Esophagus muscularis mucosa (tissue), 4 donors: ENCODE measurements at regions of chr7 and their contacts with region 1.

Region 1: DNA sequence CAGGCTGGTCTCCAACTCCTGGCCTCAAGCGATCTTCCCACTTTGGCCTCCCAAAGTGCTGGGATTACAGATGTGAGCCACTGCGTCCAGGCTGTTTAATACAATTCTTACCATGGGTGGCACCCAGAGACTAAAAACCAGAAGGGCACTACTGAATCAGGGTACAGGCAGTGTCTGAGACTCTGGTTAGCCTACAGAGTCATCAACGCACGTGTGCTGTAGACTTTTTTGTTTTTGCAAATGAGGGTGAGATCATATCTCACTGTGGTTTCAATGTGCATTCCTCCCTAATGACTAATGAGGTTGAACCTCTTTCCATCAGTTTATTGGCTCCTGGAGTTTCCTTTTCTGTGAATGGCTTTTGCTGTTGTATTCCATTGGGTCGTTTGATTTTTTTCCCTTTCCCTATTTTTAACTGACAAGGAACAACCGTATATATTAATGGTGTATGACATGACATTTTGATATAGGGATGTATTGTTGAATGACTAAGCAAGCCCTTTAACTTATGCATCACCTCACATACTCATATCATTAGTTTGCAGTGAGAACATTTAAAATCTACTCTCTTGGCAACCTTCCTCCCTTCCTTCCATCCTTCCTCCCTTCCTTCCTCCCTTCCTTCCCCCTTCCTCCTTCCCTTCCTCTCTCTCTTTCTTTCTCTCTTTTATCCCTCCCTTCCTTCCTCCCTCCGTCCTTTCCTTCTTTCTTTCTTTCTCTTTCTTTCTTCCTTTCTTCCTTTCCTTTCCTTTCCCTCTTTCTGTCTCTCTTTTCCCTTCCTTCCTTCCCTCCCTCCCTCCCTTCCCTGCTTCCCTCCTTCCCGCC is 9.3 kb upstream of the METTL27 start:
- DNase-seq: no peak
- H3K4me3 ChIP-seq: no peak overlapping the region
- H3K27ac ChIP-seq: peak overlapping the region; percentile 59 to 70 (median 64)
- H3K4me1 ChIP-seq: peaks cover 13 to 37% (median 31%) of the 10 kb centered on the region in 4 donors
- H3K27me3 ChIP-seq: peaks cover 0 to 8% (median 0%) of the 10 kb centered on the region in 4 donors
- CTCF ChIP-seq: no peak
- EP300 ChIP-seq: no peak
- POLR2A ChIP-seq: no peak

Region 2: DNA sequence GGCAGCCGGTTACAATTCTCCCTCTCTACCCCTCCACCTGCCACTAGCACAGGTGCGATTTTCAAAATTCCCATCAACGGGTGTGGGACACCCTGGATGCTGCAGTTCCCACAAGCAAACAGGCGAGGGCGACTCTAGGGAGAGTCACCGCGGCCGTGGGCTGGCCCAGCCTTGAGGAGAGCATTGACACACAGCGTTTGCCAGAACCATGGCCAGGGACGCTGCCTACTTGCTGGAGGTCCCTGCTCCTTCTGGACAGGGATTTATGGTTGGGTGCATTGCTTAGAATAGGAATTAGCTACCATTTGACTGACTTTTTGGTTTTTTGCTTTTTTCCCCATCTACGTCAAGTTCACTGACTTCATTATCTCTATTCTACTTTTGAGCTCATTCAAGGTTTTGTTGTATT is 39.9 kb before region 1 on chr7:
- intact Hi-C with region 1: loop called (anchors 2 kb)
- DNase-seq: no peak
- H3K4me3 ChIP-seq: no peak overlapping the region
- H3K27ac ChIP-seq: no peak overlapping the region
- H3K4me1 ChIP-seq: peaks cover 0 to 4% (median 0%) of the 10 kb centered on the region in 4 donors
- H3K27me3 ChIP-seq: peaks cover 0 to 16% (median 0%) of the 10 kb centered on the region in 4 donors
- CTCF ChIP-seq: peak; percentile 71 to 93 (median 82)
- EP300 ChIP-seq: no peak
- POLR2A ChIP-seq: no peak

Region 3: DNA sequence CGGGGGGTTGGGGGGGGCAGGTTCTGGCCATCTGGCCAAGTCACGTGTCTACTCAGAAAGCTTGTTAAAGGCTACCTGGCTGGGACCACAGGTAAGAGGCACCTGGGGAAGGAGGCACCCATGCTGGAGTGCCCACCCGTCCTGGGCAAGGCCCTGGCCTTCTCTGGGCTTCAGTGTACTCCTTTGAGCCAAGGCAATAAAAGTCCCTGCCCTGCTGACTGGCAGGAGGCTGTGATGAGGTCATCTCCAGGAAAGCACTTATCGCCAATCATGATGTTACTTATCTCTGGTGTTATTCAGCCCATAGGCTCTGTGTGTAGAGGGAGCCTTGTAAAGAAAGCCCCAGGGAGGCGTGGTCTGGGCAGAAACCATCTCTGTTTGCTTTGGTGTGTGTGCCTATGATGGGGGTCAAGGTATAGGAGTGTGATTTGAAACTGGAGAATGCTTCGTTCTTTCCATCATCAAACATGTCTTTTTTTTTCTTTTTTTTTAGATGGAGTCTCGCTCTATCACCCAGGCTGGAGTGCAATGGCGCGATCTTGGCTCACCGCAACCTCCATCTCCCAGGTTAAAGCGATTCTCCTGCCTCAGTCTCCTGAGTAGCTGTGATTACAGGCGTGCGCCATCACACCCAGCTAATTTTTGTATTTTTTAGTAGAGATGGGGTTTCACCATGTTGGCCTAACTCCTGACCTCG is 23.4 kb before region 1 on chr7:
- intact Hi-C with region 1: no loop called
- DNase-seq: no peak
- H3K4me3 ChIP-seq: no peak overlapping the region
- H3K27ac ChIP-seq: no peak overlapping the region
- H3K4me1 ChIP-seq: peaks cover 3 to 21% (median 17%) of the 10 kb centered on the region in 4 donors
- H3K27me3 ChIP-seq: peaks cover 0 to 46% (median 2%) of the 10 kb centered on the region in 4 donors
- CTCF ChIP-seq: no peak
- EP300 ChIP-seq: no peak
- POLR2A ChIP-seq: no peak

Region 4: DNA sequence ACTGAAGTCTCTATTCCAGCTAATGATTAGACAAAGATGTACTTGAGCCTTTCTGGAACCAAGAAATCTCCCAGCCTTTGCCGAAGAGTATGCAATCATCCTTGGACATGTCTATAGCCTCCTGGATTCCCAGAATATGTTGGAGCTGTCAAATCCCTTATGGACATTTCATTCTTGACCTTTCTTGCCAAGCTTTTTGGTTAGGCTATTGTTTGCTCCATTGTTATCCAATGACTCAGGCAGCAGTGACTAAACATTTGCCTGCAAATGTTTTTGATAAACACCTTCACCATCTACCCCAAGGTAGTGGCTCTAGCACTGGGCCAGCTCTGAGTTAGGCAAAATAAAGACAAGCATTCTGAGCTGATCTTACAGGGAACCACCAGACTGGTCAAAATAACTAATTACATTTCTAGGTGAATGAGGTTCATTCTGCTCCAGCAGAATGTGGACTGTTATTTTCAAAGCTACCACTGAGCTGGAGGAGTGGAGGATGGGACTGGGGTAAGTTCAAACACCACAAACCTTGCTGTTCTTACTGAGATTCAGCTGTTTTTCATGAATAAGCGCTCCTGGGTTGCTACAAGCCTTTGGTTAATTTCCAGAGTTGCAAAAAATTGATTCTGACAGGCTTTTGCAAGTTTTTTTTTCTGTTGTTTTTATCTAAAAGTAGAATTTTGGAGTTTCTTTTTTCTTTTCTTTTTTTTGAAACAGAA is 90.4 kb after region 1 on chr7:
- intact Hi-C with region 1: no loop called
- DNase-seq: no peak
- H3K4me3 ChIP-seq: no peak overlapping the region
- H3K27ac ChIP-seq: peak overlapping the region in 2 of 4 donors; percentile 56 to 65
- H3K4me1 ChIP-seq: peaks cover 0 to 12% (median 10%) of the 10 kb centered on the region in 4 donors
- H3K27me3 ChIP-seq: no peaks in the 10 kb centered on the region
- CTCF ChIP-seq: no peak
- EP300 ChIP-seq: no peak
- POLR2A ChIP-seq: no peak

Region 5: DNA sequence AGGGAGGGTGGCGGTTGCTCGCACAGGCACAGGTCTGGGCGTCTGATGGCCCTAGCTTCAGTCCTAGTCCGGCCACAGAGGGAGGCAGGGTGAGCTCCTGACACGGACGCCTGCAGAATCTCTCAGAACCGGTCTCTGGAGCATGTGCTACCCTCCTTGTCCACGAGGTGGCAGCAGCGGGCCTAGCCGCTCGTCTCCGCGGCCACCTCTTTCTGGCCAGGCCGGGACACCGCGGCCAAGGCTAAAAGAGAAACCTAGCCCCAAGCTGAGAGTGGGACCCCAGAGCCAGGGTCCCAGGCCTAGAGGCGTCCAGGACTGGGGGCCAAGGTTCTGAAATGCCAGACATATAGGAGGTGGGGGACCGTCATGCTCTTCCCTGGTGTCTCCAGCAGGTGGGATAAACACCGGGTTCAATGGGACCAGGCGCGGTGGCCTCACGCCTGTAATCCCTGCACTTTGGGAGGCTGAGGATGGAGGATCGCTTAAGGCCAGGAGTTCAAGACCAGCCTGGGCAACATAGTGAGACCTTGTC is 355.0 kb after region 1 on chr7:
- intact Hi-C with region 1: no loop called
- DNase-seq: peak; percentile 97
- H3K4me3 ChIP-seq: peak overlapping the region; percentile 35 to 52 (median 44)
- H3K27ac ChIP-seq: no peak overlapping the region
- H3K4me1 ChIP-seq: peaks cover 7 to 29% (median 22%) of the 10 kb centered on the region in 4 donors
- H3K27me3 ChIP-seq: no peaks in the 10 kb centered on the region
- CTCF ChIP-seq: peak; percentile 96 to 99 (median 97)
- EP300 ChIP-seq: no peak
- POLR2A ChIP-seq: no peak

Region 6: GRCh38 chr7:74289018-74289658 is 437.5 kb after region 1 on chr7 and contains the start of gene CLIP2:
- intact Hi-C with region 1: no loop called
- DNase-seq: peak; percentile 96
- H3K4me3 ChIP-seq: peak within 1 kb of the TSS; percentile 88 to 95 (median 93)
- H3K27ac ChIP-seq: peak within 1 kb of the TSS; percentile 81 to 85 (median 84)
- H3K4me1 ChIP-seq: peaks cover 24 to 48% (median 41%) of the 10 kb centered on the region in 4 donors
- H3K27me3 ChIP-seq: no peaks in the 10 kb centered on the region
- CTCF ChIP-seq: peak in 2 of 3 experiments; percentile 7 to 13
- EP300 ChIP-seq: no peak
- POLR2A ChIP-seq: no peak
- total RNA-seq, gene CLIP2: 25.5 to 44.3 (median 37.1) TPM